PC-9 (cell line): ENCODE measurements at regions of chr9 and their contacts with region 1.

Region 1: GRCh38 chr9:97921959-97922724 is at the start of gene TRMO:
- DNase-seq: peak; percentile 90 to 97
- H3K4me3 ChIP-seq: peak within 1 kb of the TSS; percentile 66
- H3K27ac ChIP-seq: peak within 1 kb of the TSS; percentile 82
- H3K4me1 ChIP-seq: peaks cover 18% of the 10 kb centered on the region; the same call in 1 of the 2 replicates
- H3K27me3 ChIP-seq: no peaks in the 10 kb centered on the region
- CTCF ChIP-seq: peak; percentile 70
- total RNA-seq, gene TRMO: 12.0 and 15.8 TPM in 2 replicates

Region 2: DNA sequence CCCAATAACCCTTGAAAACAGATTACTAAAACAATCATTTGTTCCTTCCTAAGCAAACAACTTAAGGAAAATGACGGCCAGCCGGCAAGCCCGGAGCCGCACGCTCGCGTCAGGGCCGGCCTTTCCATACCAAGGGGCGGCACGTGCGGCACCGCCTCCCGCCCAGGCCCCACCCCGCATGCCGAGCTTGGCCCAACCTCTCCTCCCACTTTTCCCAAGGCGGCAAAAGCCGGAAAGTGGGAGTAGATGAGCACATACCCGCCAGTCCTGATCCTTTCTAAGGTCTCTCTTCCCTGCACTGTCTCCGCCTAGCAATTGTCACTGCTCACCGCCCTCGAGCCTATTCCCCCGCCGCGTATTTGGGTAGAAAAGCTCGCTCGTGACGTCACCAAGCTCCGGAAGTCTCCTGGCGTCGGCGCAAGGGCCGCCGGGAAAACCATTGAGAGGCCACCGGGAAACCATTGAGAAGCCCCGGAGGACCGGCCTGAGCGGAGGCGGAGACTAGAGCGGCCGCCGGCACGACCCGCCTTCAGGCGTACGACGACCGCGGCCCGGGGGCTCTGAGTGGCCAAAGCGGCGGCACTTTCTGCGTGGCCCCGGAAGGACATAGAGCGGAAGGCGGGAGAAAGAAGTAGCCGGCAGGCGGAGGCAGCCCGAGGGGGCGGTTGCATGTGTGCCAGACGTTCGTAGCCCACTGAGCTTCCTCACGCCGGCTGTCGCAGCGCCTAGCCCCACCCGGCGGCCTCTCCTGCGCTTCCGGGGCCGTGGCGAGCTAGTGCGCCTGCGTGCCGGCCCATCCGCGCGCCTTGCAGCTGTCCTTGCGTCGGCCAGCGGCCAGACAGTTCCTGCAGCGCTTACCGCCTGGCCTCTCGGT is 288.9 kb before region 1 on chr9 and contains the starts of genes NCBP1 and TSTD2:
- CTCF ChIA-PET with region 1: interaction called, 3 read pairs
- POLR2A ChIA-PET with region 1: interaction called, 14 read pairs
- intact Hi-C with region 1: loop called (anchors 1 kb)
- DNase-seq: peak; percentile 94 to 98
- H3K4me3 ChIP-seq: peak within 1 kb of the TSS; percentile 95
- H3K27ac ChIP-seq: peak within 1 kb of the TSS; percentile 99
- H3K4me1 ChIP-seq: peaks cover 38% of the 10 kb centered on the region
- H3K27me3 ChIP-seq: no peaks in the 10 kb centered on the region
- CTCF ChIP-seq: no peak
- total RNA-seq, gene NCBP1: 38.6 and 40.2 TPM in 2 replicates
- total RNA-seq, gene TSTD2: 17.0 and 19.3 TPM in 2 replicates

Region 3: GRCh38 chr9:97895211-97895610 is 26.9 kb before region 1 on chr9:
- CTCF ChIA-PET with region 1: no interaction called
- POLR2A ChIA-PET with region 1: no interaction called
- intact Hi-C with region 1: no loop called
- DNase-seq: no peak
- H3K4me3 ChIP-seq: no peak overlapping the region
- H3K27ac ChIP-seq: no peak overlapping the region
- H3K4me1 ChIP-seq: no peaks in the 10 kb centered on the region
- H3K27me3 ChIP-seq: no peaks in the 10 kb centered on the region
- CTCF ChIP-seq: no peak

Region 4: GRCh38 chr9:98002808-98003207 is 80.7 kb after region 1 on chr9:
- CTCF ChIA-PET with region 1: interaction called, 8 read pairs
- POLR2A ChIA-PET with region 1: interaction called, 23 read pairs
- intact Hi-C with region 1: no loop called
- DNase-seq: no peak
- H3K4me3 ChIP-seq: no peak overlapping the region
- H3K27ac ChIP-seq: 0 out of 2 replicates have a peak overlapping the region, but pooled peaks have one; percentile 6
- H3K4me1 ChIP-seq: no peaks in the 10 kb centered on the region
- H3K27me3 ChIP-seq: no peaks in the 10 kb centered on the region
- CTCF ChIP-seq: no peak

Region 5: DNA sequence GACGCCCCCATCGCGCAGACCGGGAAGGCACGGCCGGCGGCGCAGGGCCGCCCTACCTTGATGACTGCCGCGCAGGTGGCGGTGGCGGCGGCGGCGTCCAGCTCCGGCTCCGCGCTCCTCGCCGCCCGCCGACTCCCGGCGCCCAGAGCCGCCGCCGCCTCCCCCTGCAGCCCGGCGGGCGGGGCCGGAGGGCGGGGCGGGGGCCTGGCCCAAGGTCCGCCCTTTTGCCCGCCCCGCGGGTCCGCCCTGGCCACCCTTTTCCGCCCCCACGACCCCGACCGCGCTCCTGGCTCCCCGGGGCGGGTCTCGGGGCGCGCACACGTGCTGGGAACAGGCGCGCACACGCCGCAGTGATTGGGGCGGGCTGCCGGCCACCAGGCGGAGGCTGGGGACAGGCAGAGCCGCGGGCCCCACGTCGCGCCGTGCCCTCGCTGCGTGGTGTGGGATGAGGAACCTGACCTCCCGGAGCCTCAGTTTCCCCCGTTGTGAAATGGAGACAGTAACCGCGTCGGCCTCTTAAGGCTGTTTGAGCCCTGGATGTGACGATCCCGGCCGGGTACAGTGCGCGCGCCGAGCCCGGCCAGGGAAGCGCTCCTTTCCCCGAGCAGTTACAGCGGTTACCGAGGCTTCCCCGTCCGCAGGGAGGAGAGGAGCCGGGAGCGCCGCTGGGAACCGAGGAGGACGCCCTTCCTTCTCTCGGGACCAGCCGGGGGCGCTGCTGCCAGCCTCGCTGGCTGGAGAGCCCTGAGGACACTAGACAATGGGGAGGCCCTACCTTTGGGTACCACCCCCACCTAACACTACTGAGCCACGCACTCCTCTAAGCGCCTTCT is 270.6 kb after region 1 on chr9 and contains the start of gene CORO2A:
- CTCF ChIA-PET with region 1: no interaction called
- POLR2A ChIA-PET with region 1: no interaction called
- intact Hi-C with region 1: loop called (anchors 5 kb)
- DNase-seq: peak; percentile 74 to 93
- H3K4me3 ChIP-seq: peak within 1 kb of the TSS; percentile 63
- H3K27ac ChIP-seq: peak within 1 kb of the TSS; percentile 46
- H3K4me1 ChIP-seq: peaks cover 16% of the 10 kb centered on the region
- H3K27me3 ChIP-seq: no peaks in the 10 kb centered on the region
- CTCF ChIP-seq: peak; percentile 62; the same call in 1 of the 2 replicates
- total RNA-seq, gene CORO2A: 19.5 and 19.8 TPM in 2 replicates

Region 6: DNA sequence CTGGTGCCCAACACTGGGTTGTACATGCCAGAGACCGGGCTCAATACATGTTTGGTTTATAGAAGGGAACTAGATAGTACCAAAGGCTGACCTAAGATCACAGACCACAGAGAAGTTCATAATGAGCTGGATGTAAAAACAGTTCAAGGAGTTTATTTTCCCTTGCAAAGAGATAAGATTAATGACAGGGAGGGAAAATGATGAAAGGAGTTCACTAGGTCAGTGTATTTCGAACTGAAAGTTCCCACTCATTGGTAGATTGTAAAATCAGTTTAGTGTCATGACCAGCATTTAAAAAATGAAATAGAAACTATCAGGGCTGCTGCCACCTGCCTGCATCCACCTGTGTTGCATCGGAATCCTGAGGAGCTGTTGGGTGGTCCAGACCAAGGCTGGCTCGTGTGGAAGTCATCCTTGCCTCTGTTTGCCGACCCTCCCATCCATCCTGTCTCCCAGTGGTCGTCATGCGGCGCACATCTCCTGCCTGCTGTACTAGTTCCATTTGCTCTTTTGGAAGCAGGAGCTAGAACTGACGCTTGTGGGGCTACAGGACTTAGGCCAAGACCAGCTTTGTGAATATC is 312.2 kb after region 1 on chr9:
- CTCF ChIA-PET with region 1: interaction called, 11 read pairs
- POLR2A ChIA-PET with region 1: interaction called, 4 read pairs
- intact Hi-C with region 1: no loop called
- DNase-seq: no peak
- H3K4me3 ChIP-seq: no peak overlapping the region
- H3K27ac ChIP-seq: no peak overlapping the region
- H3K4me1 ChIP-seq: peaks cover 36% of the 10 kb centered on the region
- H3K27me3 ChIP-seq: no peaks in the 10 kb centered on the region
- CTCF ChIP-seq: no peak; the same call in 1 of the 2 replicates

Region 7: GRCh38 chr9:98807070-98807810 is 885.1 kb after region 1 on chr9 and contains the start of gene GALNT12:
- CTCF ChIA-PET with region 1: no interaction called
- POLR2A ChIA-PET with region 1: no interaction called
- intact Hi-C with region 1: loop called (anchors 2 kb)
- DNase-seq: peak; percentile 40 to 56
- H3K4me3 ChIP-seq: peak within 1 kb of the TSS; percentile 87
- H3K27ac ChIP-seq: peak within 1 kb of the TSS; percentile 77
- H3K4me1 ChIP-seq: peaks cover 86% of the 10 kb centered on the region
- H3K27me3 ChIP-seq: no peaks in the 10 kb centered on the region
- CTCF ChIP-seq: no peak
- total RNA-seq, gene GALNT12: 50.3 and 52.9 TPM in 2 replicates

Region 8: DNA sequence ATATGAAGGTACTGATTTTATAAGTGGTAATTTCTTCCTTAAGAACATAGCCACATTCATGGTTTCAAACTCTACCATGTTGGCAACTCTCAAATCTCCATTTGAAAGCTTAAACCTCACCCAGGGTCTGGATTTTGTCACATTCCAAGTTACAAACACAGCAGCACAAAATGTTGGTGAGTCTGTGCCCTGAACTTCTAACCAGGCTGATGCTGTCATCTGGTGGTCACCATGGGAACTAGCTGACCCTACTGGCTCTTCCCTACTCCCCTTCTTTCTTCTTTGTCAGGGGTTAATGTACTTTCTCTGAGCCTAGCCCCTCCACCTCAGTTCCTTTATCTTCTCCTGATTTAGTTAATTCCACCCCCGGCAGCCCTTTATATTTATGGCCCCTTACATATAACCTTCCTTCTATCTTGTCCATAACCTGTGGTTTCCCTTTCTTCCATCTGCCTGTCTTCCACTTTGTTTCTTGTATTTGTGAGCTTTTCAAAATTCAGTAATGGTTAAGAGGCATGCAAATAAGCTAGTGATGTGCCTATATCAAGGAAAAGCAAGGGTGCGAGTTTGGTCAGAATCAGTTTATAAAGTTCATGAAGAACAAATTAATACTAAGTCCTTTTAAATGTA is 1218.7 kb after region 1 on chr9:
- CTCF ChIA-PET with region 1: no interaction called
- POLR2A ChIA-PET with region 1: interaction called, 12 read pairs
- intact Hi-C with region 1: no loop called
- DNase-seq: peak in 1 of 2 experiments; percentile 34
- H3K4me3 ChIP-seq: no peak overlapping the region
- H3K27ac ChIP-seq: no peak overlapping the region
- H3K4me1 ChIP-seq: no peaks in the 10 kb centered on the region
- H3K27me3 ChIP-seq: no peaks in the 10 kb centered on the region
- CTCF ChIP-seq: peak; percentile 74